Gastrocnemius medialis (tissue), 4 donors: ENCODE measurements at regions of chr11 and their contacts with region 1.

Region 1: GRCh38 chr11:114099392-114100178 is 40.1 kb downstream of the ZBTB16 start:
- DNase-seq: peak; percentile 53 to 80
- ATAC-seq: peak; percentile 48 to 81
- H3K4me3 ChIP-seq: peak overlapping the region; percentile 11 to 43 (median 24)
- H3K27ac ChIP-seq: peak overlapping the region; percentile 94 to 99 (median 96)
- H3K4me1 ChIP-seq: peaks cover 97 to 98% of the 10 kb centered on the region in 2 donors
- H3K27me3 ChIP-seq: no peaks in the 10 kb centered on the region
- CTCF ChIP-seq: no peak
- POLR2A ChIP-seq: peak; percentile 24 to 69

Region 2: DNA sequence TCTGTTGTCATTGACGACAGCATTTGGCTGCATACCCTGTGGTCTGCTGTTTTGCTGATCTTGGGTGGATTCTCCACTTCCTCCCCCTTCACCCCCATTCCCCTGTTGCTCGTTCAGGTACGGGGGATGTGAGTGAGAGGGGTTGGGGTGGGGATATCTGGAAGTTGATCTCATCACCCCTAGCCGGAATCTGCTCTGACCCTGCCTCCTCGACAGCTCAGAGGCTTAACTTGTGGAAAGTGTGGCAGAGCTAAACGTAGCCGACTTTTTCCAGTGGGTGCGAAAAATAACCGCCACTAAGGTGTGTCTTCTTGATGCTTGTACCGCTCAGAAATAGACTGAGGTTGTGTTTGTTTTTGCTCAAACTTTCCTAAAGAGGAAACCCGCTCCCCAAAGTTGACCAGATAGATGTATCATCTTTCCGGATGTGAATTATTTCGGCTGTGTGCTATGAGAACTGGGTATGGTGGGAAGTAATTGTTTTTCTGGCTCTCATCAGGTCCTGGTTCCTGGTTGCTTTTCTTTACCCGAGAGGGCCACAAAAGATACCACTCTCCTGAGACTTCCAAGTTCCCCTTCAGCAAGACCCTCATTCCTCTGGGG is 33.4 kb before region 1 on chr11:
- in situ Hi-C with region 1: no loop called
- intact Hi-C with region 1: loop called (anchors 2 kb)
- DNase-seq: no peak
- ATAC-seq: no peak
- H3K4me3 ChIP-seq: peak overlapping the region; percentile 68 to 100 (median 82)
- H3K27ac ChIP-seq: peak overlapping the region; percentile 94 to 99 (median 96)
- H3K4me1 ChIP-seq: peaks cover 72 to 87% of the 10 kb centered on the region in 2 donors
- H3K27me3 ChIP-seq: no peaks in the 10 kb centered on the region
- CTCF ChIP-seq: no peak
- POLR2A ChIP-seq: no peak

Region 3: GRCh38 chr11:114080219-114080618 is 19.4 kb before region 1 on chr11:
- in situ Hi-C with region 1: no loop called
- intact Hi-C with region 1: loop called (anchors 1 kb)
- DNase-seq: peak; percentile 75 to 78
- ATAC-seq: peak; percentile 63 to 72
- H3K4me3 ChIP-seq: peak overlapping the region in 3 of 4 donors; percentile 48 to 54 (median 50)
- H3K27ac ChIP-seq: peak overlapping the region; percentile 94 to 99 (median 96)
- H3K4me1 ChIP-seq: peaks cover 100% of the 10 kb centered on the region in 2 donors
- H3K27me3 ChIP-seq: no peaks in the 10 kb centered on the region
- CTCF ChIP-seq: no peak
- POLR2A ChIP-seq: peak; percentile 73 to 83